PC-3 (cell line): ENCODE measurements at regions of chr4 and their contacts with region 1.

Region 1: GRCh38 chr4:135072553-135072952 is 871.0 kb upstream of the PABPC4L start:
- DNase-seq: no peak
- ATAC-seq: no peak
- H3K4me3 ChIP-seq: no peak overlapping the region
- H3K27ac ChIP-seq: no peak overlapping the region
- H3K4me1 ChIP-seq: no peaks in the 10 kb centered on the region
- H3K27me3 ChIP-seq: no peaks in the 10 kb centered on the region
- CTCF ChIP-seq: no peak

Region 2: DNA sequence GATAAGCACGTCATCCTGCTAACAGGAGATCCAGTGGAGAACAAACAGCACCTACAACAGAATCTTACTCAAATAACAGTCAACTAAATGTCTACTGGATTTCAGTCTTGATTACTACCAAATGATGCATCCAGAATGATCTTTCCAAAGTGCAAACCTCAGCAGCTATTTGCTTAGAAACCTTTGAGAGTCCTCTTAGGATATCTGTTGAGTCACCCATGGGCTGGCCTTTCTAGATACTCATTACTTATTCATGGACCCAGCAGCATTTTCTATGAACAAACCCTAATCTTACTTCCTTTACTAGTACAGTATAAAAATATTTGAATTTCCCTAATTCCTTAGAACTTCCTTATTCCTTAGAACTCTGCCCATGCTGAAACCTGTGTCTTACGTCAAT is 752.5 kb before region 1 on chr4:
- CTCF ChIA-PET with region 1: no interaction called
- POLR2A ChIA-PET with region 1: interaction called, 21 read pairs
- intact Hi-C with region 1: no loop called
- DNase-seq: peak; percentile 25
- ATAC-seq: no peak
- H3K4me3 ChIP-seq: no peak overlapping the region
- H3K27ac ChIP-seq: no peak overlapping the region
- H3K4me1 ChIP-seq: no peaks in the 10 kb centered on the region
- H3K27me3 ChIP-seq: no peaks in the 10 kb centered on the region
- CTCF ChIP-seq: no peak